Endothelial cell of umbilical vein (primary cell): ENCODE measurements at regions of chr10 and their contacts with region 1.

Region 1: GRCh38 chr10:48656241-48656913 is 28.3 kb upstream of the WDFY4 start:
- DNase-seq: peak; percentile 90
- H3K4me3 ChIP-seq: peak overlapping the region in 2 of 3 experiments; percentile 42 to 60
- H3K27ac ChIP-seq: peak overlapping the region; percentile 78
- H3K4me1 ChIP-seq: peaks cover 20% of the 10 kb centered on the region
- H3K27me3 ChIP-seq: peaks cover 0 to 4% of the 10 kb centered on the region in 2 experiments
- CTCF ChIP-seq: peak; percentile 94 to 99
- POLR2A ChIP-seq: no peak

Region 2: GRCh38 chr10:48369555-48369954 is 286.8 kb before region 1 on chr10:
- CTCF ChIA-PET with region 1: interaction called, 327 read pairs
- POLR2A ChIA-PET with region 1: interaction called, 4 read pairs
- dilution Hi-C with region 1: no loop called
- intact Hi-C with region 1: no loop called
- DNase-seq: no peak
- H3K4me3 ChIP-seq: no peak overlapping the region
- H3K27ac ChIP-seq: no peak overlapping the region
- H3K4me1 ChIP-seq: peaks cover 20% of the 10 kb centered on the region
- H3K27me3 ChIP-seq: no peaks in the 10 kb centered on the region
- CTCF ChIP-seq: no peak
- POLR2A ChIP-seq: no peak

Region 3: GRCh38 chr10:48506147-48506917 is 150.0 kb before region 1 on chr10:
- CTCF ChIA-PET with region 1: interaction called, 38 read pairs
- POLR2A ChIA-PET with region 1: interaction called, 3 read pairs
- dilution Hi-C with region 1: no loop called
- intact Hi-C with region 1: loop called (anchors 1 kb)
- DNase-seq: peak; percentile 67
- H3K4me3 ChIP-seq: no peak overlapping the region
- H3K27ac ChIP-seq: no peak overlapping the region
- H3K4me1 ChIP-seq: peaks cover 19% of the 10 kb centered on the region
- H3K27me3 ChIP-seq: no peaks in the 10 kb centered on the region
- CTCF ChIP-seq: peak; percentile 36 to 53
- POLR2A ChIP-seq: no peak

Region 4: DNA sequence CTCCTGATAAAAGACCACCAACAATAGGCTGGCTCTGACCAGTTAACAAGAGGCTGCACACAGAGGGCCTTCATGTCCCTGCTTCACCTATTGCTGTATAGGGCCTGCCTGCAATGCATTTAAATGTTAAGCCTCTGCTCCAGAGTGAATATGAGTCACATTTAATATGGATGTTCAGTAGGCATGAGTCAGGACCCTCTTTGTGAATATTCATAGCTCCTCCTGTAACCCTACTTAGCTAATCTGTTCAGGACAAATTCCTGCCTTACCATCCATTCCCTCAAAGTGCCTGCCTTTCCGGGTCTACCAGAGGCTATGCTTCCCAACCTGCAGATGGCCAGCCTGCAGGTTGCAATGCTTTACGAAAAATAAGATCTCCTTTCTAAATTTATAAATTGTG is 84.0 kb before region 1 on chr10:
- CTCF ChIA-PET with region 1: interaction called, 17 read pairs
- POLR2A ChIA-PET with region 1: no interaction called
- dilution Hi-C with region 1: no loop called
- intact Hi-C with region 1: no loop called
- DNase-seq: no peak
- H3K4me3 ChIP-seq: no peak overlapping the region
- H3K27ac ChIP-seq: no peak overlapping the region
- H3K4me1 ChIP-seq: no peaks in the 10 kb centered on the region
- H3K27me3 ChIP-seq: no peaks in the 10 kb centered on the region
- CTCF ChIP-seq: no peak
- POLR2A ChIP-seq: no peak

Region 5: GRCh38 chr10:48623607-48624132 is 32.7 kb before region 1 on chr10:
- CTCF ChIA-PET with region 1: interaction called, 24 read pairs
- POLR2A ChIA-PET with region 1: no interaction called
- dilution Hi-C with region 1: no loop called
- intact Hi-C with region 1: no loop called
- DNase-seq: peak; percentile 10
- H3K4me3 ChIP-seq: no peak overlapping the region
- H3K27ac ChIP-seq: no peak overlapping the region
- H3K4me1 ChIP-seq: peaks cover 28% of the 10 kb centered on the region
- H3K27me3 ChIP-seq: no peaks in the 10 kb centered on the region
- CTCF ChIP-seq: no peak
- POLR2A ChIP-seq: no peak

Region 6: DNA sequence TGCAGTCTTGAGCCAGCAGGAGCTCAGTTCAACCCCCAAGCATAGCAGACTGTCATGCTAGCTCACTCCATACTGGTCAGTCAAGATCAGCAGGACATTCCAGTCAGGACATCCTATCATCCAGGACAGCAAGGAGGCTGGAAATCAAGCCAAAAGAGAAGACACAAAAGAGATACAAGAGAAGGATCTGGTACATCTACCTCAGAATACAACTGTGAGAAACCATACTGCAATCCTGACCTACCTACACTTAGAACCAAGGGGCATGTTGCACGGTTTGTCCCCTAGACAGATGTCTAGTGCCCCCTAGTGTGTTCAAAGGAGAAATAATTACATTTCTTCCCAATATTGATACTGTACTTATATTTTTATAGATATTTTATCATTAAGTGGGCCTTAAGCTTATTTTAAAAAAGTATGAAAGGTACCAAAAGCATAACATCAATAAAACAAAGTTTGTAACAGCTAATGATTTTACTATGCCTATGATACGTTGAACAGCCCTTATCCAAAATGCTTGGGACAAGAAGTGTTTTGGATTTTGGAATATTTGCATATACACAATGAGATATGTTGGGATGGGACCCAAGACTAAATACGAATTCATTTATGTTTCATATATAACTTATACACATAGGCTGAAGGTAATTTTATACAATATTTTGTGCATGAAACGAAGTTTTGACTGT is 855.9 kb after region 1 on chr10:
- CTCF ChIA-PET with region 1: interaction called, 99 read pairs
- POLR2A ChIA-PET with region 1: no interaction called
- dilution Hi-C with region 1: no loop called
- intact Hi-C with region 1: loop called (anchors 2 kb)
- DNase-seq: peak; percentile 26
- H3K4me3 ChIP-seq: no peak overlapping the region
- H3K27ac ChIP-seq: no peak overlapping the region
- H3K4me1 ChIP-seq: peaks cover 2% of the 10 kb centered on the region
- H3K27me3 ChIP-seq: no peaks in the 10 kb centered on the region
- CTCF ChIP-seq: peak; percentile 40 to 49
- POLR2A ChIP-seq: no peak